CD4-positive, alpha-beta T cell (primary cell): ENCODE measurements at regions of chr5 and their contacts with region 1.

Region 1: DNA sequence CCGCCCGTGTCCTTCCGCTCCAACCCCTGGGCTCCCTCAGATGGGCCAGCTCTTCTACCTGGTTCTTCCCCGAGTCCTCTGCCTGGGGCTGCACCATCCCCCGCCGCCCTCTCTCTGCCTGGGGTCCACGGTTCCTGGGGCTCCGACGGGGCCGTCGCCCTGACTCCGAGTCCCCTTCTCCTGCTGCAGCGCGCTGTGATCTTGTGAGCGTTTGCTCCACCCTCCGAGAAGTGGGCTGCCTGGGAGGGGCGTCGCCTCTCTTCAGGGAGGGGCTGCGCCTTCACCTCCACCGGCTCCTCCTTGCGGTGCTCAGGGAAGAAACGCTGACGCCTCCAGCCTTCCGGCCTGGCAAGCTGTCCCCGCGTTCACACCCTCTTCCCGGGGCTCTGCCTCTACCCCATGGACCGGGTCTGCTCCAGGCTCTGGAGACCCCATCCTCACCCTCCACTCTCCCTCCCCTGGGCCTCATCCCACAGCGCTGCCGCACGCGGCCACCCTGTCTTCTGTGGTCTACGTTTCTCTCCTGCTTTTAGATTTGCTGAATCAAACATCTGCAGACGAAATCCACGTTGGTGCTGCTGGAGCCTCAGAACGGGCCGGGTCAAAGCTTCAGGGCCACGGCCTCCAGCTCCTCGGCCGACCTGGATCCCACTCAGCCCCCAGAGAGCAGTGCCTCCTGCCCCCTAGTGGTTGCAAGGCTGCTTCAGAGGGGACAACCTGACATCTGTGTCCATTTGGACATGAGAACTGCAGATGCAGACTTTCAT is 22.7 kb upstream of the SLC6A3 start:
- DNase-seq: peak in 8 of 14 experiments; percentile 20 to 52 (median 36)
- ATAC-seq: no peak
- H3K4me3 ChIP-seq: no peak overlapping the region
- H3K4me3 Mint-ChIP-seq: no peak overlapping the region
- H3K27ac ChIP-seq: no peak overlapping the region
- H3K27ac Mint-ChIP-seq: no peak overlapping the region
- H3K4me1 ChIP-seq: no peaks in the 10 kb centered on the region
- H3K4me1 Mint-ChIP-seq: no peaks in the 10 kb centered on the region
- H3K27me3 ChIP-seq: no peaks in the 10 kb centered on the region
- H3K27me3 Mint-ChIP-seq: no peaks in the 10 kb centered on the region
- CTCF ChIP-seq: peak; percentile 58

Region 2: DNA sequence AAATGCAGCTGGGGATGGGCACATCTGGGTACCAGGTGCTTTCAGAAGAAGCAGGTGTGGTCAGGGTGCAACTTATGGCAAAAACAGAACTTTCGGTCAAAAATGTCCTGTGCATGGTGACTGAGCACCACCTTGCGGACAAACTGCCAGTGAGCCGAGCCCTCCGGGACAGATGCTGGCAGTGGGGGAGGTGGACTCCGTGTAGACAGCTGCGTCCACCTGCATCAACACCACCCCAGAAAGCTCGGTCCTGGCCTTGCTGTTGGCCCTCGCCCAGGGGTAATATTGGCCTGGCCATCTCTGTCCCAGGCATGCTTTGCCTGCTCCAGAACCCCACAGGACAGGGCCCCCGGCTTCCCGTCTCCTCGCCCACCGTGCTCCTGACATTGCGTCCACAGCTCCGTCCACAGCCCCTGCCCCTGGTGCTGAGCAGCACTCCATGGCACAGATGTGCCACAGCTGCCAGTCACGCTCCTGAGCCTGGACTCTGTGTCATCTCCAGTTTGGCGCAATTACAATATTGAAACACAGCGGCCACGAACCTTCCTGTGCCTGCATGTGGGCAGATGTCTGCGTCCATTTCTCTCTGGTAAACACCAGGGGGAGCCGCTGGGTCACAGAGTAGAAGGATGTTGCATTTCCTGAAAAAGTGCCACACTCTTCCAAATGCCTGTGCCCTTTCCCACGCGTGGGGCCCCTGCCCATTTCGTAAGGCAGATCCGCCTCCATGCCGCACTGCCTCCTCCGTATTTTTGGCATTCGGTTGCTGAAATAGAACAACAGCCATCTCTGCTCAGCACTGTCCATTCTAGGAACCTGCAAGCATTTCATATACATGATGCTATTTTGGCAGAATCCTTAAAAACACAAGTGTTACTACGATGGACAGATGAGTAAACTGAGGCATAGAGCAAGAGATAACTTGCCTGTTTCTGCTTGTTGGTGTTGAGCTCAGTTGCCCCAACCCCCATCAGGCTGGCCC is 299.9 kb before region 1 on chr5:
- CTCF ChIA-PET with region 1: no interaction called
- POLR2A ChIA-PET with region 1: no interaction called
- intact Hi-C with region 1: loop called (anchors 1 kb)
- DNase-seq: peak; percentile 52 to 85 (median 62)
- ATAC-seq: peak; percentile 88
- H3K4me3 ChIP-seq: peak overlapping the region; percentile 3
- H3K4me3 Mint-ChIP-seq: peak overlapping the region; percentile 62
- H3K27ac ChIP-seq: no peak overlapping the region
- H3K27ac Mint-ChIP-seq: no peak overlapping the region
- H3K4me1 ChIP-seq: peaks cover 13% of the 10 kb centered on the region
- H3K4me1 Mint-ChIP-seq: peaks cover 7% of the 10 kb centered on the region
- H3K27me3 ChIP-seq: peaks cover 0 to 10% of the 10 kb centered on the region in 2 experiments
- H3K27me3 Mint-ChIP-seq: peaks cover 4% of the 10 kb centered on the region
- CTCF ChIP-seq: peak; percentile 86

Region 3: GRCh38 chr5:1380011-1380817 is 87.7 kb before region 1 on chr5:
- CTCF ChIA-PET with region 1: no interaction called
- POLR2A ChIA-PET with region 1: no interaction called
- intact Hi-C with region 1: loop called in 1 of 2 experiments (anchors 5 kb)
- DNase-seq: peak; percentile 19 to 76 (median 48)
- ATAC-seq: peak; percentile 89
- H3K4me3 ChIP-seq: peak overlapping the region; percentile 24
- H3K4me3 Mint-ChIP-seq: peak overlapping the region; percentile 75
- H3K27ac ChIP-seq: no peak overlapping the region
- H3K27ac Mint-ChIP-seq: peak overlapping the region; percentile 54
- H3K4me1 ChIP-seq: peaks cover 18% of the 10 kb centered on the region
- H3K4me1 Mint-ChIP-seq: peaks cover 9% of the 10 kb centered on the region
- H3K27me3 ChIP-seq: no peaks in the 10 kb centered on the region
- H3K27me3 Mint-ChIP-seq: no peaks in the 10 kb centered on the region
- CTCF ChIP-seq: peak; percentile 84